ENCODE measurements at regions of chr5 and their contacts with region 1.

Region 1: GRCh38 chr5:14727428-14727865 is 62.9 kb downstream of the OTULIN start:
- DNase-seq: peak; percentile 89
- ATAC-seq: peak; percentile 76

Region 2: DNA sequence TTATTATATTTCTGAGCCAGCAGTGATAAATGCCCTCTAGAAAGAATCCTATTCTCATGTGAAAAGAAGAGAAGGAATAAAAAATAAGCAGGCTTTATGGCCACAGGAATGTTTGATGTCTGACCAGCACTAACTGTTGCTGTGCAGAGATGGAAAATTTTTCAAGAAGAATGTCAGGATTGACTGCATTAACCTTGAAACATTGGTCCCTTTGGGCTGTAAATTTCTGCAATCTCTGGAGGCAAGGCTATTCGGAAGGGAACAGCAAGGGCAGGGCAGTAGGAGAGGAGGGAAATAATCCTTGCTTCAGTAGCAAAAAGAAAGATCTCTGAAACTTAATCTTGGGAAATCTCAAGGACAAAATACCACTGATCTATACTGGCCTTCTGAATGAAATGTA is 1198.1 kb before region 1 on chr5:
- intact Hi-C with region 1: no loop called
- DNase-seq: no peak
- ATAC-seq: no peak

Region 3: GRCh38 chr5:14685757-14686156 is 41.7 kb before region 1 on chr5:
- intact Hi-C with region 1: loop called (anchors 2 kb)
- DNase-seq: no peak
- ATAC-seq: peak; percentile 38